ENCODE measurements at regions of chr9 and their contacts with region 1.

Region 1: GRCh38 chr9:127734747-127735529 is at the start of gene TOR2A:
- DNase-seq: peak; percentile 99
- ATAC-seq: peak; percentile 93
- H3K4me3 Mint-ChIP-seq: peak within 1 kb of the TSS; percentile 72
- H3K27ac Mint-ChIP-seq: peak within 1 kb of the TSS; percentile 73
- H3K4me1 Mint-ChIP-seq: peaks cover 12% of the 10 kb centered on the region
- H3K27me3 Mint-ChIP-seq: no peaks in the 10 kb centered on the region
- total RNA-seq, gene TOR2A: 11.3 to 14.0 TPM

Region 2: DNA sequence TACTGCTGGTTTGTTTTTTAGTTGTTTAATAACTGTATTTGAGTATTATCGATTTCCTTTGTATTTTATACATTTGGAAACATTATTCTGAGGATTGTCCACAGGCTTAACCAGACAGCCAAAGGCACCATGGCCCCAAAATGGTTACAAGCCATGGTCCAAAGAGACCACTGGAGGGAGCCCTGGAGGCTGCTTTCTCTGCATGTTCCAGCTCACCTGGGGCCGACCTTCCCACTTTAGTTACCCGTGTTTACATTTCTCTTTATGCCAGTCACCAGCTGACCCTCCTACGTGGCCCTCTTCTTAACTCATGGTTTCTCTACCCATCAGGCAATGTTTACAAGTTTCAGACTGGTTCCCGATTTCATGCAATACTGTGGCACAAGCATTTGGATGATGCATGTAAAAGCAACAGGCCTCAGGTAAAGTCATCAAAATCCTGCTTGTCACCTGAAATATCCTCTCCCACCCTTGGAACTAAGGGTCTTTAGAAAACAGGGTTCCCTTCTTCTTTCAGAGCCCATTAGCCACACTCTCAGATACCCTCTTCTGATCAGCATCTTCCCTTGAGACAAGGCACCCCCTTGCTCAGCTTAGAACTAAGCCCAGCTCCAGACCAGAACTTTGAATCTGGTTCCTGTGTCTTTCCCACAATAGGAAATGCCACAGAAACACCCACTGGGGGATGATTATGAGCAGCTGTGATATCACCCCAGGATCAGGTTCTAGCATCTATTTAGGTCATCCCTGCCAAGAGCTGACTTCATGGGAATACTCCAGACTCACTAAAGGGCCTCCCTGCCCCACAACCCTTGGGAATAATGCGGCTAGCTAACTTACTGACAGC is 520.3 kb before region 1 on chr9:
- CTCF ChIA-PET with region 1: no interaction called
- POLR2A ChIA-PET with region 1: no interaction called
- intact Hi-C with region 1: no loop called
- DNase-seq: peak; percentile 80
- ATAC-seq: peak; percentile 83
- H3K4me3 Mint-ChIP-seq: no peak overlapping the region
- H3K27ac Mint-ChIP-seq: no peak overlapping the region
- H3K4me1 Mint-ChIP-seq: peaks cover 4% of the 10 kb centered on the region
- H3K27me3 Mint-ChIP-seq: no peaks in the 10 kb centered on the region

Region 3: GRCh38 chr9:127568971-127569885 is 165.7 kb before region 1 on chr9:
- CTCF ChIA-PET with region 1: interaction called, 4 read pairs
- POLR2A ChIA-PET with region 1: no interaction called
- intact Hi-C with region 1: loop called in 1 of 2 experiments (anchors 1 kb)
- DNase-seq: peak; percentile 88
- ATAC-seq: peak; percentile 85
- H3K4me3 Mint-ChIP-seq: peak overlapping the region; percentile 71
- H3K27ac Mint-ChIP-seq: peak overlapping the region; percentile 38
- H3K4me1 Mint-ChIP-seq: peaks cover 26% of the 10 kb centered on the region
- H3K27me3 Mint-ChIP-seq: no peaks in the 10 kb centered on the region

Region 4: GRCh38 chr9:127698985-127699670 is 35.8 kb before region 1 on chr9:
- CTCF ChIA-PET with region 1: interaction called, 5 read pairs
- POLR2A ChIA-PET with region 1: no interaction called
- intact Hi-C with region 1: loop called in 1 of 2 experiments (anchors 1 kb)
- DNase-seq: peak; percentile 91
- ATAC-seq: peak; percentile 100
- H3K4me3 Mint-ChIP-seq: peak overlapping the region; percentile 67
- H3K27ac Mint-ChIP-seq: peak overlapping the region; percentile 21
- H3K4me1 Mint-ChIP-seq: peaks cover 12% of the 10 kb centered on the region
- H3K27me3 Mint-ChIP-seq: no peaks in the 10 kb centered on the region

Region 5: GRCh38 chr9:127779136-127779981 is 44.4 kb after region 1 on chr9:
- CTCF ChIA-PET with region 1: interaction called, 13 read pairs
- POLR2A ChIA-PET with region 1: interaction called, 5 read pairs
- intact Hi-C with region 1: loop called in 1 of 2 experiments (anchors 1 kb)
- DNase-seq: peak; percentile 85
- ATAC-seq: peak; percentile 70
- H3K4me3 Mint-ChIP-seq: peak overlapping the region; percentile 92
- H3K27ac Mint-ChIP-seq: peak overlapping the region; percentile 99
- H3K4me1 Mint-ChIP-seq: peaks cover 60% of the 10 kb centered on the region
- H3K27me3 Mint-ChIP-seq: no peaks in the 10 kb centered on the region

Region 6: GRCh38 chr9:127862075-127863011 is 127.4 kb after region 1 on chr9:
- CTCF ChIA-PET with region 1: interaction called, 23 read pairs
- POLR2A ChIA-PET with region 1: no interaction called
- intact Hi-C with region 1: loop called in 1 of 2 experiments (anchors 1 kb)
- DNase-seq: peak; percentile 43
- ATAC-seq: peak; percentile 20
- H3K4me3 Mint-ChIP-seq: no peak overlapping the region
- H3K27ac Mint-ChIP-seq: peak overlapping the region; percentile 51
- H3K4me1 Mint-ChIP-seq: peaks cover 41% of the 10 kb centered on the region
- H3K27me3 Mint-ChIP-seq: no peaks in the 10 kb centered on the region

Region 7: GRCh38 chr9:127916665-127917613 is 182.0 kb after region 1 on chr9 and contains the start of gene ST6GALNAC4:
- CTCF ChIA-PET with region 1: interaction called, 28 read pairs
- POLR2A ChIA-PET with region 1: no interaction called
- intact Hi-C with region 1: loop called (anchors 1 kb)
- DNase-seq: peak; percentile 98
- ATAC-seq: peak; percentile 96
- H3K4me3 Mint-ChIP-seq: peak within 1 kb of the TSS; percentile 76
- H3K27ac Mint-ChIP-seq: peak within 1 kb of the TSS; percentile 69
- H3K4me1 Mint-ChIP-seq: peaks cover 47% of the 10 kb centered on the region
- H3K27me3 Mint-ChIP-seq: no peaks in the 10 kb centered on the region
- total RNA-seq, gene ST6GALNAC4: 14.9 to 20.7 TPM

Measured in activated CD4-positive, alpha-beta T cell treated with anti-CD3 and anti-CD28 coated beads for 36 hours (primary cell).